Activated T-helper 1 cell treated with anti-CD3 and anti-CD28 coated beads, Interleukin-12 subunit alpha, Interleukin-12 subunit beta, Interleukin-2, Interleukin-4 antibody, amounts not matched to agents 30 ng/mL and 10 ng/mL and 1 ng/mL, durations not matched to agents 14 hours and 24 hours and 36 hours (primary cell): ENCODE measurements at regions of chr19 and their contacts with region 1.

Region 1: DNA sequence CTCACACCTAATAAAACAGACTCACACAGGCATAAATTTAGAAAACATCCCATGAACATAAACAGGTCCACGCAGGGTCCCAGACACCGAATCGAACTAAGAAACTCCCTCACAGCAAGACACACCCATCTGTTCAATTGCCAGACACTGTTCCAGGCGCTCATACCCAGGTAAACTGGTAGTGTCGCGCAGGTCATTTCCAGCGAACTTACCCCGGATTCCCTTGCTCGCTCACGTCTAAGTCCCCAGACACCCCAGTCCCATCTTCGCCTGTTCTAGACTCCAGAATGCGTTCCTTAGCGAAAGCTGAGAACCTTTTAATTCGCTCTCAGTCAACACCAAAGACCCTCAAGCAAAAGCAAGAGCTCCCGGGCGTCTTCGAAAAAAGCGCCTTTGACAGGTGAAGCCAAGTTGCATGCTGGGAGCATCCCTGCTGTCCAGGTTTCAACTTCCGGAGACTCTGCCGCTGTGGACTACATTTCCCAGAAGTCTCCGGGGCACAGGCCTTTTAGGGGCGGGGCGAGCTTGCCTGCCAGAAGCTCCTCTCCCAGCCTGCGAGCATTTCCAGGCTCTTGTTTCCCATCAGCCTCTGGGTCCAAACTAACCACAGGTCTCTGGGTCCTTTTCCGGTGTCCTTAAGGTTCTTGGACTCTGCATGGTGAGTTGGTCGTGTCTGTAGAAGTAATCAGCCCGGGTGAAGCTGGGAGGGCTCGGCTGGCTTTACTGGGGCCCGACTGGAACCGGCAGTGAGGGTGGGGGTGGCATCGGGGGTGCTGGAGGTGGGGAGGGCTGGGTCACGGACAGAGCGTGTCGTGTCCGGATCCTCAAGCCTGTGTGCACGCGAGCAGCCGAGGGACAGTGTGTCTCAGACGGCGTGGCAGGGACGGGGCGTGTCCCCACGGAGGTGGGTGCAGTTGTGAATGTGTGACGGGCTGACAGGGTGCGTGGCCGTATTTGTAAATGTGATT is at the start of gene ZNF283:
- DNase-seq: peak; percentile 77
- H3K4me3 Mint-ChIP-seq: peak within 1 kb of the TSS; percentile 86
- H3K27ac Mint-ChIP-seq: peak within 1 kb of the TSS; percentile 68
- H3K4me1 Mint-ChIP-seq: peaks cover 19% of the 10 kb centered on the region
- H3K27me3 Mint-ChIP-seq: peaks cover 11% of the 10 kb centered on the region
- total RNA-seq, gene ZNF283: 4.0 and 4.8 TPM in 2 replicates

Region 2: DNA sequence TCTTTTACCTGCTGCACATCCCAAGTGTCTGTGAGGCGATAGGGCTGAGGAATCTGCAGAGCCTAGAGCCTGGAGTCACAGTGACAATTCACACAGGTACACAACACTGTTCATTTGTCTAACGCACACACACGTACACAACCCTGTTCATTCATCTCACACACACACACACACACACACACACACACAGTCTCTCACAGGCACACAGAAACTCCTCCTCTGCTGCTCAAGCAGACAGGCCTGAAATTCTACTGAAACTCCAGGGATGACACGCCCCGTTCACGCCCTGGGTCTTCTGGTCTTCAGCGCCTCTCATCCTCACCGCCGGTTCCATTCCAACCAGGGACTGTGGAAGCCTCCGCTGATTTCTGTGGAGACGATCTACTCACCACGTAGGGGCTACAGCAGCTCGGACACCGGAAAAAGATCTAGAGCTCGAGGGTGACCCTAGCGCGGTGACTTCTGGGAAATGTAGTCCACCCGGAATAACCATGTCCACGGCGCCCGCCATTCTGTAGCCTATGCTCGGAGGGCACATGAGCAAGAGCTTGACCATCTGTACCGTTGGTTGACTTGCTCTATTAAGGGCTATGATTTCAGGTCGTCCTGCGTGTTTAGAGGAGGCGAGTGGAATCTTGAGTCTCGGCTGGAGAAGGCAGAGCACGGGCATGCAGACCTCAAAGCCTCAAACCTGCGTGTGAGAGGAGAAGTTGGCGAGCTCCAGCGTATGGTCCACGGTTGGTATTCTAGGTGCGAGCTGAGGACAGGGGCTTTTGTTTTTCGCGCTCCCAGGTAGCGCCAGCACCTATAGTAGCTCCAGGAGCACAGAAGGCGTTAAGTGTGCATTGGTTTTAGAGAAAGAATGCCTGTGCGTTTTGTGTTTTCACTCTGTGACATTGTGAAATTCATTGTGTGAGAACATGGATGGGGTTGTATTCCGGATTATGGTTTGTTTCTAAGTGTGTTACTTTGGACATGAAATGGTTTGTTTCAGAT is 74.6 kb after region 1 on chr19:
- intact Hi-C with region 1: loop called (anchors 1 kb)
- DNase-seq: peak; percentile 54
- H3K4me3 Mint-ChIP-seq: peak overlapping the region; percentile 81
- H3K27ac Mint-ChIP-seq: peak overlapping the region; percentile 20
- H3K4me1 Mint-ChIP-seq: peaks cover 15% of the 10 kb centered on the region
- H3K27me3 Mint-ChIP-seq: no peaks in the 10 kb centered on the region

Region 3: GRCh38 chr19:43983912-43984686 is 157.0 kb after region 1 on chr19 and contains the start of gene ZNF155:
- intact Hi-C with region 1: loop called (anchors 1 kb)
- DNase-seq: peak; percentile 56
- H3K4me3 Mint-ChIP-seq: peak within 1 kb of the TSS; percentile 94
- H3K27ac Mint-ChIP-seq: peak within 1 kb of the TSS; percentile 88
- H3K4me1 Mint-ChIP-seq: peaks cover 8% of the 10 kb centered on the region
- H3K27me3 Mint-ChIP-seq: no peaks in the 10 kb centered on the region
- total RNA-seq, gene ZNF155: 5.2 and 6.5 TPM in 2 replicates

Region 4: GRCh38 chr19:44093931-44094765 is 267.1 kb after region 1 on chr19 and contains the start of gene ZNF224:
- intact Hi-C with region 1: loop called (anchors 1 kb)
- DNase-seq: peak; percentile 73
- H3K4me3 Mint-ChIP-seq: peak within 1 kb of the TSS; percentile 98
- H3K27ac Mint-ChIP-seq: peak within 1 kb of the TSS; percentile 91
- H3K4me1 Mint-ChIP-seq: peaks cover 22% of the 10 kb centered on the region
- H3K27me3 Mint-ChIP-seq: no peaks in the 10 kb centered on the region
- total RNA-seq, gene ZNF224: 18.8 and 20.4 TPM in 2 replicates

Region 5: GRCh38 chr19:44207126-44207803 is 380.2 kb after region 1 on chr19:
- intact Hi-C with region 1: loop called (anchors 1 kb)
- DNase-seq: peak; percentile 73
- H3K4me3 Mint-ChIP-seq: peak overlapping the region; percentile 86
- H3K27ac Mint-ChIP-seq: peak overlapping the region; percentile 69
- H3K4me1 Mint-ChIP-seq: peaks cover 16% of the 10 kb centered on the region
- H3K27me3 Mint-ChIP-seq: peaks cover 2% of the 10 kb centered on the region